ENCODE measurements at regions of chr6 and their contacts with region 1.

Region 1: DNA sequence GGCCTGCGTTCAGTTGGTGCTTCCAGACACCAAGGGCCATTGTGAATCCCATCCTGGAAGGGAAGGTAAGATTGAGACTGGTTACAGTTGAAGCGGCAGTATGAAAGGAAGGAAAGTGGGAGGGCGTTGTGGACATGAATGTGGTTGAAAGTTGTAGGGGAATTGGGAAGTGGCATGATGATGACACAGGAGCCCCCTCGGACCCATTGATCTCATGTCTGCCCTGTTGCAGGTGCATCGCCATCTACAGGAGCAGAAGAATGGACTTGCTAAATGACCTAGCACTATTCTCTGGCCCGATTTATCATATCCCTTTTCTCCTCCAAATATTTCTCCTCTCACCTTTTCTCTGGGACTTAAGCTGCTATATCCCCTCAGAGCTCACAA is 5.5 kb downstream of the HLA-DQA1 start:
- DNase-seq: no peak
- H3K4me3 ChIP-seq: no peak overlapping the region
- H3K27ac ChIP-seq: no peak overlapping the region
- H3K4me1 ChIP-seq: no peaks in the 10 kb centered on the region
- H3K27me3 ChIP-seq: no peaks in the 10 kb centered on the region
- CTCF ChIP-seq: no peak

Region 2: DNA sequence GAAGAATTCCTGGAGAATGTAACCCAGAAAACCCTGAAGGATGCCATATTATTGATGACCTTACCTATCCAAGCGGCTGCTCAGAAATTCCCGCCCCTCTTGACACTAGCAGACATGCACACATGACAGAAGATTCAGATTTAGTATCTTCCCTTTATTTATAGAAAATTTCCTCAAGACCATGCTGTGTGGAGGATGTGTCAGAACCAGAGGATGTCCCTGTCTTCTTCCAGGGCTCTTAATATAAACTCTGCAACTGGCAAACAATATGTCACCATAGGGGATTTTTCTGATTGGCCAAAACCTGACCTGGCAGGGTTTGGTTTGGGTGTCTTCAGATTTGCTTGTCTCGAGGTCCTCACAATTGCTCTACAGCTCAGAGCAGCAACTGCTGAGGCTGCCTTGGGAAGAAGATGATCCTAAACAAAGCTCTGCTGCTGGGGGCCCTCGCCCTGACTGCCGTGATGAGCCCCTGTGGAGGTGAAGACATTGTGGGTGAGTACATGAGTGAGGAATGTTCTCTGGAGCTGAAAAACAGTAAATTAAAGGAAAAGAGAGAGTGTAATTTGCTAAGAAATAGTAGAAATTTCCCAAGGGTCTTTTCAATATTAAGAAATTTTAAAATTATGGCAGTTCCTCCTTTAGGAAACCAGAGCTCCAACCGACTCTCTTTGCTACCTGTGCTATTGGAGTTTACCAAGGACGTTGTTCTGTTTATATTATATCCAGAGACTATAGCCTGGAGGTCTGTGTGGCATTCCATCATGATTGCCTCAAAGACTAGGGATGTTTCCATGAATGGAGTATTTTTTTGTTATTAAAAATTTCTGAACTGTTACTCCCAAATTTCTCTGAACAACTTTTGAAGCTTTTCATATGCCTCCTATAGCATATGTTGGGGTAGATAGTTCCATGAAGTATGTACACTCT is 98.6 kb after region 1 on chr6 and contains the start of gene HLA-DQA2:
- intact Hi-C with region 1: loop called (anchors 10 kb)
- DNase-seq: no peak
- H3K4me3 ChIP-seq: no peak within 1 kb of the TSS
- H3K27ac ChIP-seq: no peak within 1 kb of the TSS
- H3K4me1 ChIP-seq: no peaks in the 10 kb centered on the region
- H3K27me3 ChIP-seq: no peaks in the 10 kb centered on the region
- CTCF ChIP-seq: no peak

Region 3: GRCh38 chr6:32774426-32774825 is 131.7 kb after region 1 on chr6:
- intact Hi-C with region 1: no loop called
- DNase-seq: no peak
- H3K4me3 ChIP-seq: no peak overlapping the region
- H3K27ac ChIP-seq: no peak overlapping the region
- H3K4me1 ChIP-seq: no peaks in the 10 kb centered on the region
- H3K27me3 ChIP-seq: peaks cover 0 to 9% of the 10 kb centered on the region in 2 donors
- CTCF ChIP-seq: no peak